Heart left ventricle (tissue), 16 donors: ENCODE measurements at regions of chr2 and their contacts with region 1.

Region 1: DNA sequence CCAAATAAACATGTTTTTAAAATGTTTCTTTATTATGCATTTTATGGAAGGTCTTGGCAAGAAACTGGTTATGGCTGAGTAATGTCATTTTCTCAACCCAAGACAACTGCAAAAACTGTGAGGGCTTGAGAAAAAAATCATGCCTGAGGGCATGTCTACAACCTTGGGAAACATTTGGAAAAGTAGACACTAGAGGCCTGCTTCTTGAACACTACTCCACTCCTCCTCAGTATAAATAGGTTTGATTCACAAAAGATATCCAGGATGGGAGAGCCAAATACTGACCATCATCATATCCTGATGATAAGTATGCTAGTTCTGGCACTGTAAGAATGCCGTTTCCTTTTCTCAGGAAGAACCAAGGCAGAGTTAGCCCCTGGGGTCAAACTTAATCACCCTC is 71.1 kb downstream of the OSR1 start:
- DNase-seq: no peak
- ATAC-seq: peak in 1 of 4 donors; percentile 37
- H3K4me3 ChIP-seq: no peak overlapping the region
- H3K27ac ChIP-seq: no peak overlapping the region
- H3K4me1 ChIP-seq: peaks cover 0 to 6% (median 0%) of the 10 kb centered on the region in 12 donors
- H3K27me3 ChIP-seq: no peaks in the 10 kb centered on the region
- CTCF ChIP-seq: no peak
- POLR2A ChIP-seq: no peak

Region 2: DNA sequence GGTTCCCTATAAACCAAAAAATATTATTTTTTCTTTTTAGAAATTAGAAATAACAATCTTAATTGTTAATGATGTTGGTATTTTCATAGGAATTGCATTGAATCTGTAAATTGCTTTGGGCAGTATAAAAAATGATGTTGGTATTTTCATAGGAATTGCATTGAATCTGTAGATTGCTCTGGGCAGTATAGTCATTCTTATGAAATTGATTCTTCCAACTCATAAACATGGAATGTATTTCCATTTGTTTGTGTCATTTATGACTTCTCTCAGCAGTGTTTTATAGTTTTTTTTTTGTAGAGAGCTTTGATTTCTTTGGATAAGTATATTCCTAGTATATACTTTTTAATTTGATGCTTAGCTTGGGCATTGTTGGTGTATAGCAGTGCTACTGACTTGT is 616.0 kb before region 1 on chr2:
- intact Hi-C with region 1: loop called in 1 of 10 experiments (anchors 5 kb)
- DNase-seq: no peak
- ATAC-seq: no peak
- H3K4me3 ChIP-seq: no peak overlapping the region
- H3K27ac ChIP-seq: no peak overlapping the region
- H3K4me1 ChIP-seq: no peaks in the 10 kb centered on the region
- H3K27me3 ChIP-seq: no peaks in the 10 kb centered on the region
- CTCF ChIP-seq: no peak
- POLR2A ChIP-seq: no peak

Region 3: GRCh38 chr2:19235308-19235707 is 52.0 kb before region 1 on chr2:
- intact Hi-C with region 1: no loop called
- DNase-seq: no peak
- ATAC-seq: no peak
- H3K4me3 ChIP-seq: no peak overlapping the region
- H3K27ac ChIP-seq: no peak overlapping the region
- H3K4me1 ChIP-seq: no peaks in the 10 kb centered on the region
- H3K27me3 ChIP-seq: no peaks in the 10 kb centered on the region
- CTCF ChIP-seq: no peak
- POLR2A ChIP-seq: no peak

Region 4: DNA sequence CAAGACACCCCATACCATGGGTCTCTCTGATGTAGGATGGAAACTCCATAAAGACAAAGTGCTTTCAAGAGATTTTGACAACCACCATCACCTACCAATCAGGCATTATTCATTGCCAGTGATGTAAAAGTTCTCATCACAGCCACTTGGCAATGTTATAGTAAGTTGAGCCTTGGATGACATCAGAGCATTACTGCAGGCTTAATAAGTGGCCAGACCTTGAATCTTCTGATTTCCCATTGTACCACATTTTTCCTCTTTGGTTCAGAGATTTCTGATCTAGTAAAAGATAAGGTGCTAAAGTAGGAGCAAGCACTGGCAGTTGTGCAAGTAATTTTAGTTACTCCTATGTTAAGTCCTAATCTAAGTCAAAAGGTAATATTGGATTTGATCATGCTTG is 34.6 kb after region 1 on chr2:
- intact Hi-C with region 1: no loop called
- DNase-seq: no peak
- ATAC-seq: no peak
- H3K4me3 ChIP-seq: no peak overlapping the region
- H3K27ac ChIP-seq: no peak overlapping the region
- H3K4me1 ChIP-seq: no peaks in the 10 kb centered on the region
- H3K27me3 ChIP-seq: no peaks in the 10 kb centered on the region
- CTCF ChIP-seq: no peak
- POLR2A ChIP-seq: no peak

Region 5: DNA sequence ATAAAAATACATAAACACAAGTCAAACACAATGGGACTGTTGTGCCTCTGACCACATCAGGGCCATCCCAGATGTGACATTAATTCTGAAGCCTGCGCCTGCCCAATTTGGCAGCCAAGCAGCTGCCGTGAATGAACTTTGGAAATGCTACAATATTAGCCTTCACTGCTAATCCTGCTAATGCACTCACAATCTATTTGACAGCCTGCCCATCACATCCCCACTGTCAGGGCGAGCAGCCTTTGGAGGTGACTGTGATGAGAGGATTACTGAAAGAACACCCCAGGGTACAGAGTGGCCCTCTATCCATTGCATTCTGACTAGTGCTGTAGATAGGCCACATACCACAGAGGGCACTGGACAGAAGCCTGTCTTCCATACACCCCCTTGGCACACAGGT is 49.5 kb after region 1 on chr2:
- intact Hi-C with region 1: no loop called
- DNase-seq: peak in 1 of 5 donors; percentile 74
- ATAC-seq: peak; percentile 79 to 99 (median 98)
- H3K4me3 ChIP-seq: no peak overlapping the region
- H3K27ac ChIP-seq: peak overlapping the region in 2 of 12 donors; percentile 2 to 58
- H3K4me1 ChIP-seq: peaks cover 0 to 25% (median 1%) of the 10 kb centered on the region in 12 donors
- H3K27me3 ChIP-seq: no peaks in the 10 kb centered on the region
- CTCF ChIP-seq: no peak
- POLR2A ChIP-seq: no peak

Region 6: DNA sequence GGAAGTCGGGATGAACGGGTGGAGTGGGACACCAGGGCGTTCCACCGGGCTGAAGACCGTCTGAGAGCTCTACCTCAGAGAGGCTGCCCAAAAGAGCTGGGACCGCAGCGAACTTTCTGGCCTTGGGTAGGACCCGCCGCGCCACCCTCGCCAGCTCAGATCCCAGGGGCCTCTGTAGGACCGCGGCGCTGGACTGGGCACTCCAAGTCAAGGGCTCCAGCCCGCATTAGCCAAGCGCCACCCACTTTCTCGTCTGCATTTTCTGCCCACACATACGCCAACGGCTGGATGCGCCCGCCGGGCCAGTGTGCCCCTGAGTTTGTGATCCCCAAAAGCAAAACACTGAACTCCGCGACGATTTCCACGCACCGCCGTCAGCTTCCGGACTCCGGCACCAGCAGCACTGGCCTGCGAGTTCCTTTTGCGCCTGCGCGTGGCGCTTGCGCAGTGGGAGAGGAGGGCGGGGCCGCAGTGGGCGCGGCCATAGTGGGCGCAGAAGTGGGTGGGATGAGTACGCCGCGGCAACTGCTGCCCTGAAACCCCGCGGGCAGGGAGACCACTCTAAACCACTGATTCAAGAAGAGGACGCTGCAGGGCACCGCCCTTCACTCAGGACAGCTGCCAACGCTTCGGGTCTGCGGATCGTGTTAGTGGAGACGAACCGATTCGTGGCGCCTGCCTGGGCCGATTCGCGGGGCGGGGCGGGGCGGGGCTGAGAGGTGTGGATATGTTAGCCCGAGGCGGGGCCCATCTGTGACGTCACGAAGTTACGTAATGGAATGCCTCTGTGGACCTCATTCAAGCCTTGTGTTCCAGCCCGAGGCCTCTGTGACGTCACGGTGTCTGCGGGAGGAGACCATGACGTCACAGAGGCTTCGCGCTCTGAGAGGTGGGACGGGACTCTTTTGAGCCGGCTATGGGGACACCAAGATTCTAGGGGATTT is 60.6 kb after region 1 on chr2:
- intact Hi-C with region 1: no loop called
- DNase-seq: peak; percentile 91 to 96 (median 95)
- ATAC-seq: peak; percentile 96 to 98 (median 98)
- H3K4me3 ChIP-seq: peak overlapping the region; percentile 62 to 96 (median 81)
- H3K27ac ChIP-seq: peak overlapping the region; percentile 78 to 99 (median 94)
- H3K4me1 ChIP-seq: peaks cover 0 to 31% (median 14%) of the 10 kb centered on the region in 12 donors
- H3K27me3 ChIP-seq: peaks cover 0 to 34% (median 7%) of the 10 kb centered on the region in 9 donors
- CTCF ChIP-seq: no peak
- POLR2A ChIP-seq: peak; percentile 64 to 96